OCI-LY7 (cell line): ENCODE measurements at regions of chr16 and their contacts with region 1.

Region 1: GRCh38 chr16:9090960-9091866 is at the start of gene HAPSTR1:
- DNase-seq: peak; percentile 100
- H3K4me3 ChIP-seq: peak within 1 kb of the TSS; percentile 92
- H3K27ac ChIP-seq: peak within 1 kb of the TSS; percentile 75
- H3K4me1 ChIP-seq: peaks cover 35% of the 10 kb centered on the region
- CTCF ChIP-seq: no peak
- total RNA-seq, gene HAPSTR1: 50.9 and 51.5 TPM in 2 replicates

Region 2: GRCh38 chr16:8868416-8869211 is 222.6 kb before region 1 on chr16 and contains the start of gene CARHSP1:
- CTCF ChIA-PET with region 1: interaction called, 5 read pairs
- POLR2A ChIA-PET with region 1: interaction called, 4 read pairs
- intact Hi-C with region 1: loop called (anchors 2 kb)
- DNase-seq: peak; percentile 94
- H3K4me3 ChIP-seq: peak within 1 kb of the TSS; percentile 92
- H3K27ac ChIP-seq: peak within 1 kb of the TSS; percentile 89
- H3K4me1 ChIP-seq: peaks cover 63% of the 10 kb centered on the region
- CTCF ChIP-seq: no peak
- total RNA-seq, gene CARHSP1: 236 and 241 TPM in 2 replicates

Region 3: DNA sequence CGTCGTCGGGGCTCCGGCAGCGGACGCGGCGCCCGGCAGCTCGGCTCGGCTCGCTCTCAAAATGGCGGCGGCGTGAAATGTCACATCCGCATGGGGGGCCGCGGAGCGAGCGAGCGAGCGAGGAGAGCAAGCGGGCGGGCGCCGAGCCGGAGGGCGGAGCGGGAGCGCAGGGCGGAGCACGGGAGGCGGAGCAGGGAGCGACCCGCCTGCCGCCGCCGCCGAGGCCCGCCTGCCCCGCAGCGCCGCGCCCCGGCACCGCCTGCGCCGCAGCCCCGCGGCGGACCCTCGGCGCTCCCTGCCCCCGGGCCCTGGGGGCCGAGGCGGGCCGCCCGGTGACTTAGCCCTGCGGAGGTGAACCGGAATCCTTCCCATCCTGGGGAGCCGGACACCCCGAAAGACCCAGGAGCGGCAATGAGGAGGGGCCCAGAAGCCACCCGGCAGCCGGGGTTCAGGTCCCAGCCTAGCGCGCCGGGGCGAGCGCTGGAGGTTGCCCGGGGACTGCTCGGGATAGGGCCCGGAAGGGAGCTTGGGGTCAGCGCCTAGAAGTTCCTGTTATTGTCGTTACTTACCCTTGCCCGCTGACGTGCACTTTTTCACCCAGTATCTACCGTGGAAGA is 127.3 kb before region 1 on chr16 and contains the start of gene USP7:
- CTCF ChIA-PET with region 1: no interaction called
- POLR2A ChIA-PET with region 1: interaction called, 6 read pairs
- intact Hi-C with region 1: loop called (anchors 2 kb)
- DNase-seq: peak; percentile 94
- H3K4me3 ChIP-seq: peak within 1 kb of the TSS; percentile 84
- H3K27ac ChIP-seq: peak within 1 kb of the TSS; percentile 67
- H3K4me1 ChIP-seq: peaks cover 38% of the 10 kb centered on the region
- CTCF ChIP-seq: no peak
- total RNA-seq, gene USP7: 46.4 and 61.5 TPM in 2 replicates

Region 4: DNA sequence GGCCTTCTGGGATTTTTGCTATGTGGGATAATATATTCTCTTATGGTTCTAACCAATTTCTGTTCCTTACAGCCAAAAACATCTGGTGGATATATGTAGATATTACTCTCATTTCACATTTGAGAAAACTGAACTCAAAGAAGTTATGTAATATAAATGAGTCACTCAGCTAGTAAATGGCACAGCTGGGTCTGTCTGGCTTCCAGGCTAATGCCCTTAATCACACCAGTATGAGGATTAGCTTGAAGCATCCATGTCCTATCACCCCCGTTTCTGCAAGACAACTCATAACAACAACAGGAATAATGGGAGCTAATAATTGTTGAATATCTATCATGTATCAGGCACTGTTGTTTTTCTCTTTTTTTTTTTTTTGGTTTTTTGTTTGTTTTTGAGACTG is 93.1 kb before region 1 on chr16:
- CTCF ChIA-PET with region 1: no interaction called
- POLR2A ChIA-PET with region 1: no interaction called
- intact Hi-C with region 1: no loop called
- DNase-seq: no peak
- H3K4me3 ChIP-seq: no peak overlapping the region
- H3K27ac ChIP-seq: no peak overlapping the region
- H3K4me1 ChIP-seq: no peaks in the 10 kb centered on the region
- CTCF ChIP-seq: no peak

Region 5: DNA sequence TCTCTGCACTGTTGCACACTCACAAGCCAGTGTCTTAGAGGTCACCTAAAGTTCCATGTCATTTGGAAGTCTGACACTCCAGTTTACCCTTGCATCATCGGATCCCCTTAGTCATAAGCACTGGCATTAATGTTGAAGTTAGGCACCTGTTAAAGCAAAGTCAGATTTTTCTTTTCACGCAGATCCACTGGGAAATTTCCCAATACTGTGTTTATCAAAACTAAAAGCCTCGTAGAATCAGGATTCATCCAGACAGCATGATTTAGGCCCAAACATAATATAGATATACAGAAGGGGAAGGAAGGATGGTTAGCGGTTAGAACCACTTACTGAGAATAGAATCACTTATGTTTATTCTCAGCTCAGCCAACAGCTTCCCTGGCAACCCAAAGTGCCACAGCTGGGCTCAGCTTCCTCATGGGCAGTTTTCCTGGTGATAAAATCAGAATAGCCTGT is 29.8 kb before region 1 on chr16:
- CTCF ChIA-PET with region 1: no interaction called
- POLR2A ChIA-PET with region 1: interaction called, 11 read pairs
- intact Hi-C with region 1: no loop called
- DNase-seq: peak; percentile 66
- H3K4me3 ChIP-seq: peak overlapping the region; percentile 37
- H3K27ac ChIP-seq: peak overlapping the region; percentile 49
- H3K4me1 ChIP-seq: peaks cover 44% of the 10 kb centered on the region
- CTCF ChIP-seq: no peak

Region 6: DNA sequence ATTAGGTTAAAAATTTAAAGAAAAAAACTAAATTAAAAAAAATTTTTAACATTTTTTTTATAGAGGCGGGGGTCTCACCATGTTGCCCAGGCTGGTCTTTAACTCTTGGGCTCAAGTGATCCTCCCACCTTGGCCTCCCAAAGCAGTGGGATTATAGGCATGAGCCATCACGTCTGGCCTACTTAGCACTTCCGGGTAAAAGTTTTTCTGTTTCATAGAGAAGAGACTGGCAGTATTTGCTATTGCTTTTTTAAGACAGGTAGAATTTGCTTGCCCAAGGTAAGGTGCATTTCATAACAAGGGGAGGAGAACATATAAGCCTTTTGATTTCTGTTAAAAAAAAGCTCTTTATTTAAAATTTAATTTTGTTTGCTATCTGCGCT is 11.8 kb before region 1 on chr16:
- CTCF ChIA-PET with region 1: interaction called, 5 read pairs
- POLR2A ChIA-PET with region 1: interaction called, 46 read pairs
- intact Hi-C with region 1: loop called (anchors 1 kb)
- DNase-seq: no peak
- H3K4me3 ChIP-seq: no peak overlapping the region
- H3K27ac ChIP-seq: peak overlapping the region; percentile 22
- H3K4me1 ChIP-seq: peaks cover 34% of the 10 kb centered on the region
- CTCF ChIP-seq: no peak

Region 7: GRCh38 chr16:9297437-9298113 is 206.4 kb after region 1 on chr16:
- CTCF ChIA-PET with region 1: no interaction called
- POLR2A ChIA-PET with region 1: no interaction called
- intact Hi-C with region 1: no loop called
- DNase-seq: peak; percentile 12
- H3K4me3 ChIP-seq: no peak overlapping the region
- H3K27ac ChIP-seq: no peak overlapping the region
- H3K4me1 ChIP-seq: no peaks in the 10 kb centered on the region
- CTCF ChIP-seq: peak; percentile 80

Region 8: GRCh38 chr16:10895053-10895946 is 1804.1 kb after region 1 on chr16:
- CTCF ChIA-PET with region 1: no interaction called
- POLR2A ChIA-PET with region 1: no interaction called
- intact Hi-C with region 1: loop called (anchors 10 kb)
- DNase-seq: peak; percentile 52
- H3K4me3 ChIP-seq: no peak overlapping the region
- H3K27ac ChIP-seq: peak overlapping the region; percentile 50
- H3K4me1 ChIP-seq: peaks cover 71% of the 10 kb centered on the region
- CTCF ChIP-seq: no peak